Activated CD8-positive, alpha-beta T cell treated with anti-CD3 and anti-CD28 coated beads for 36 hours (primary cell): ENCODE measurements at regions of chr19 and their contacts with region 1.

Region 1: GRCh38 chr19:47436712-47437401 is 17.5 kb upstream of the MEIS3 start:
- DNase-seq: peak; percentile 91
- ATAC-seq: peak; percentile 87
- H3K4me3 Mint-ChIP-seq: no peak overlapping the region
- H3K27ac Mint-ChIP-seq: no peak overlapping the region
- H3K4me1 Mint-ChIP-seq: peaks cover 26% of the 10 kb centered on the region
- H3K27me3 Mint-ChIP-seq: peaks cover 41% of the 10 kb centered on the region
- CTCF ChIP-seq: peak; percentile 88

Region 2: GRCh38 chr19:47447470-47448359 is 10.9 kb after region 1 on chr19:
- CTCF ChIA-PET with region 1: interaction called, 20 read pairs
- POLR2A ChIA-PET with region 1: no interaction called
- intact Hi-C with region 1: no loop called
- DNase-seq: peak; percentile 81
- ATAC-seq: peak; percentile 87
- H3K4me3 Mint-ChIP-seq: peak overlapping the region; percentile 35
- H3K27ac Mint-ChIP-seq: no peak overlapping the region
- H3K4me1 Mint-ChIP-seq: peaks cover 40% of the 10 kb centered on the region
- H3K27me3 Mint-ChIP-seq: peaks cover 52% of the 10 kb centered on the region
- CTCF ChIP-seq: no peak

Region 3: GRCh38 chr19:47483800-47484690 is 47.2 kb after region 1 on chr19 and contains the start of gene KPTN:
- CTCF ChIA-PET with region 1: interaction called, 32 read pairs
- POLR2A ChIA-PET with region 1: interaction called, 3 read pairs
- intact Hi-C with region 1: loop called (anchors 2 kb)
- DNase-seq: peak; percentile 93
- ATAC-seq: peak; percentile 84
- H3K4me3 Mint-ChIP-seq: peak within 1 kb of the TSS; percentile 85
- H3K27ac Mint-ChIP-seq: peak within 1 kb of the TSS; percentile 99
- H3K4me1 Mint-ChIP-seq: peaks cover 36% of the 10 kb centered on the region
- H3K27me3 Mint-ChIP-seq: no peaks in the 10 kb centered on the region
- CTCF ChIP-seq: peak; percentile 96
- total RNA-seq, gene KPTN: 10.4 to 11.0 TPM

Region 4: DNA sequence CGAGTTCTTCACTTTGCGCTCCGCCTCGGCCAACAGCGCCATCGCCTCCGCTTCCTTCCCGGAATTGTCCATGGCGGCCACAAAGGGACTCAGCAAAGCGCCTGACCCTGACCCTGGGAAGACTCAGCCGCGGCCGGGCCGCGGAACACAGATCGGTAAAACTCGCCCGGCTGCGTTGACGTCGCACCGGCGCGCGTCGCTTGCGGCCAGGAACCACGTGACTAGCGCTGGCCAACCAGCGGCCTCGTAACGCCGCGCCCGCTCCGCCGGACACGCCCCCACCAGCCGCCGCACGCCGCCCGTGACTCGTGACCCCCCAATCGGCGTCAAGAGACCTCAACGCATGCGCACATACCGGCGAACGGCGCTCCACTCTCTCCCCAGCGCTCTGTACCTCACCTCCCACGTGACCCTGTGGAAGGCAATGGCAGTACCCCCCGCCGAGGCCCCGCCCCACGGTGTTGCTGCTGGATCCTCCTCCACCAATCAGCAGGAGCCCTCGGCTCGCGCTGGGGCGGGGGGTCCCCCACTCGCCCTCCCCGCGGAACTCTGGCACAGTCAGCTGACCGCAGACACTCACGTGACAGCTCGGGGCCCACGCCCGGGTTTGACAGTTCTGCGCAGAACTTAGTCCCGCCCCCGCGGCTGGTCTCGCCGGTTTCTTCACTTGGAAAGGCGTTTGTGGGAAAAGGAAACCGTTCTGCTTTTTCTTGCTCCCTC is 78.2 kb after region 1 on chr19 and contains the start of gene NAPA:
- CTCF ChIA-PET with region 1: interaction called, 21 read pairs
- POLR2A ChIA-PET with region 1: no interaction called
- intact Hi-C with region 1: loop called (anchors 10 kb)
- DNase-seq: peak; percentile 100
- ATAC-seq: peak; percentile 98
- H3K4me3 Mint-ChIP-seq: peak within 1 kb of the TSS; percentile 98
- H3K27ac Mint-ChIP-seq: peak within 1 kb of the TSS; percentile 98
- H3K4me1 Mint-ChIP-seq: peaks cover 75% of the 10 kb centered on the region
- H3K27me3 Mint-ChIP-seq: no peaks in the 10 kb centered on the region
- CTCF ChIP-seq: no peak
- total RNA-seq, gene NAPA: 43.9 to 47.2 TPM

Region 5: DNA sequence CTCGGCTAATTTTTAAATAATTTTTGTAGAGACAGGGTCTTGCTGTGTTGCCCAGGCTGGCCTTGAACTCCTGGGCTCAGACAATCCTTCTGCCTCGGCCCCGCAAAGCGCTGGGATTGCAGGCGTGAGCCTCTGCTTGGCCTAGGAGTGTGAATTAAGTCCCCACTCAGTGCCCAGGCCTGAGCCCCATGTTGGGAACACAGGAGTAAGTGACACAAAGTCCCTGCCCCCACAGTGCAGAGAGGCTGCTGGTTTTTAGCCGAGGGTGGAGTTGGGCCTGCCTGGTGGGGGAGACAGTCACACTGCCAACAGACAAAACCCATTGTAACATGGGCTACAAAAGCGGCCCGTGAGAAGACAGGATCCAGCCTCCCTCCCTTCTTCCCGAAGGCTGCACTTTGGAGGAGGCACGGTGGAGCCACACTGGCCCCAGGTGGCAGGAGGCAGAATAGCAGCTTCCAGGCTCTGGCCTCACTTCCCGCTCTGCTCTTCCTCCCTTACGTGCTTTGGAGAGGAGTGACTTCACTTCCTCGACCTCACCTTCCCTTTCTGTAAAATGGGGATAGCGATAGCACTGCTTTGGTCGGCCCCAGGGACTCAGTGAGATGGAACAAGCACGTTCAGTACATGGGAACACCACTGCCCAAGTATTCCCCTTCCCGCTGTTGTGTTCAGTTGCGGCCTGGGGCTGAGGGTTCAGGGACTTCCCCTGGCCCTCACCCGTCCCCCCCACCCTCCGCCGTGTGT is 261.2 kb after region 1 on chr19:
- CTCF ChIA-PET with region 1: interaction called, 91 read pairs
- POLR2A ChIA-PET with region 1: no interaction called
- intact Hi-C with region 1: loop called (anchors 2 kb)
- DNase-seq: peak; percentile 69
- ATAC-seq: peak; percentile 87
- H3K4me3 Mint-ChIP-seq: no peak overlapping the region
- H3K27ac Mint-ChIP-seq: no peak overlapping the region
- H3K4me1 Mint-ChIP-seq: no peaks in the 10 kb centered on the region
- H3K27me3 Mint-ChIP-seq: no peaks in the 10 kb centered on the region
- CTCF ChIP-seq: peak; percentile 96

Region 6: GRCh38 chr19:47707135-47707925 is 270.5 kb after region 1 on chr19:
- CTCF ChIA-PET with region 1: interaction called, 91 read pairs
- POLR2A ChIA-PET with region 1: interaction called, 4 read pairs
- intact Hi-C with region 1: no loop called
- DNase-seq: peak; percentile 88
- ATAC-seq: peak; percentile 99
- H3K4me3 Mint-ChIP-seq: no peak overlapping the region
- H3K27ac Mint-ChIP-seq: no peak overlapping the region
- H3K4me1 Mint-ChIP-seq: no peaks in the 10 kb centered on the region
- H3K27me3 Mint-ChIP-seq: peaks cover 9% of the 10 kb centered on the region
- CTCF ChIP-seq: peak; percentile 88

Region 7: GRCh38 chr19:47713046-47714021 is 276.5 kb after region 1 on chr19 and contains the start of gene EHD2:
- CTCF ChIA-PET with region 1: interaction called, 91 read pairs
- POLR2A ChIA-PET with region 1: interaction called, 4 read pairs
- intact Hi-C with region 1: no loop called
- DNase-seq: peak; percentile 57
- ATAC-seq: peak; percentile 88
- H3K4me3 Mint-ChIP-seq: peak within 1 kb of the TSS; percentile 16
- H3K27ac Mint-ChIP-seq: no peak within 1 kb of the TSS
- H3K4me1 Mint-ChIP-seq: peaks cover 2% of the 10 kb centered on the region
- H3K27me3 Mint-ChIP-seq: peaks cover 32% of the 10 kb centered on the region
- CTCF ChIP-seq: peak; percentile 94
- total RNA-seq, gene EHD2: 1.1 to 1.4 TPM